Sciatic nerve (tissue), 2 donors: ENCODE measurements at regions of chr16 and their contacts with region 1.

Region 1: DNA sequence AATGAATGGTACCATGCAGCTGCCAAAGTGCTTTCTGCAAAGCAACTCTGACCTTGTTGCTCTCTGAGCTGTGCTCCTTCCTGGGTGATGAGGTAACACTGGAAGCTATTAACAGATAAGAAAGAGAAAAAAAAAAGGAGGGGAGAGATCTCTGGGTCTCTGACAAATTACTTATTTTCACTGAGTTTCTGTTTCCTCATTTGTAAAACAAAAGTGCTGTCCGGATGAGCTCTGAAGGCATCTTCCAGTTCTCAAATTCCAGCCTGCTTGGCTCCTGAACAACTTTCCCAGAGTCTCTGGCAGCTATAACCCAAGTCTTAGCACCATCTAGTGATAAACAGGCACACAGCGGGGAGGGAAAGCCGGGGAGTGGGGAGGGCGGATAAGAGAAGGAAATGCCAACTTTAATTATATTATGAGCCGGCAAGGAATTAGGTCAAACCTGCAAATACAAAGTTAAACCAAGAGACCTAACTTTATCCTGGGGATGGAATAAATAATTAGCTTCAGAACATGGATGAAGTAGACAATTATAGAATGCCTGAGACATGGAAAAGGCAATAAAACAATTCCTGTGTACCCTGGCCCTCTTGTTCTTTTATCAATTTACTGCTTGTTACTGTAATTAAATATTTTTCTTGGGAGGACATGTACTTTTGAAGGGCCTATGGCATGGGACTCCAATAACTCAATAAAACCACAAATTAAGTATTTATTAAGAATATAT is 61.3 kb upstream of the KIFC3 start:
- DNase-seq: peak; percentile 74
- ATAC-seq: peak; percentile 95

Region 2: GRCh38 chr16:57757326-57757786 is 106.2 kb before region 1 on chr16:
- intact Hi-C with region 1: loop called (anchors 5 kb)
- DNase-seq: peak; percentile 96
- ATAC-seq: peak; percentile 94

Region 3: GRCh38 chr16:57802341-57803133 is 61.1 kb before region 1 on chr16 and contains the start of gene KIFC3:
- intact Hi-C with region 1: loop called (anchors 10 kb)
- DNase-seq: peak; percentile 93
- ATAC-seq: peak; percentile 55
- total RNA-seq, gene KIFC3: 94.3 TPM

Region 4: DNA sequence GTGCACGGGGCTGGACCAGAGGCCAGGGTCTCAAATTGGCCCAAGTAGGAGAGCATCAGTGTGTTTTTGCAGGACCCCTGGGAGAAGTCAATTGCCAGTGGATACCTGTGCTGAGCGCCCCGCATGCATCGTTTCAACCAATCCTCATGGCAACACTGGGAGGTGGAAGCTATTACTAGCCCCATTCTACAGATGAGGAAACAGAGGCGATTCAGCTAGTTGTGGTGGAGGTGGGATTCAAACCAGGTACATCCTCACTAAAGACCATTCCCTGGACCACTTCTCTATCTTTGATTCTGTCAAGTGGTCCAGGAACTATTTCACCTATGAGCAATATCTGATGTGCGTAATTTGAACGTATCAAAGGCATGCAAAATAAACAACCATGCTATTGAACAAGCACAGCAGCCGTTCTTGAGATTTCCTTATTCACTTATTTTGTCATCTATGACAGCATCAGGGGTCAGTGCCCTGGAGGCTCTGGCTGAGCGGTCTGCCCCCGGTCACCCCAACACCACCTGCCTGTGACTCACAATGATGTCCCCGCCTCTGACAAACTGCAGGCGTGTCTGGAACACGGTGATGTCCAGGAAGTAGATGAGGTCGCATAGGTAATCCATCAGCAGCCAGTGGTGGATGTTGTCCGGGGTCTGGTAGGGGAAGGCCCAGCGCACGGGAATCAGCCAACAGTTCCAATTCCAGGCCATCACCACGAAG is 53.3 kb after region 1 on chr16:
- intact Hi-C with region 1: no loop called
- DNase-seq: no peak
- ATAC-seq: no peak